ENCODE measurements at regions of chr9 and their contacts with region 1.

Region 1: DNA sequence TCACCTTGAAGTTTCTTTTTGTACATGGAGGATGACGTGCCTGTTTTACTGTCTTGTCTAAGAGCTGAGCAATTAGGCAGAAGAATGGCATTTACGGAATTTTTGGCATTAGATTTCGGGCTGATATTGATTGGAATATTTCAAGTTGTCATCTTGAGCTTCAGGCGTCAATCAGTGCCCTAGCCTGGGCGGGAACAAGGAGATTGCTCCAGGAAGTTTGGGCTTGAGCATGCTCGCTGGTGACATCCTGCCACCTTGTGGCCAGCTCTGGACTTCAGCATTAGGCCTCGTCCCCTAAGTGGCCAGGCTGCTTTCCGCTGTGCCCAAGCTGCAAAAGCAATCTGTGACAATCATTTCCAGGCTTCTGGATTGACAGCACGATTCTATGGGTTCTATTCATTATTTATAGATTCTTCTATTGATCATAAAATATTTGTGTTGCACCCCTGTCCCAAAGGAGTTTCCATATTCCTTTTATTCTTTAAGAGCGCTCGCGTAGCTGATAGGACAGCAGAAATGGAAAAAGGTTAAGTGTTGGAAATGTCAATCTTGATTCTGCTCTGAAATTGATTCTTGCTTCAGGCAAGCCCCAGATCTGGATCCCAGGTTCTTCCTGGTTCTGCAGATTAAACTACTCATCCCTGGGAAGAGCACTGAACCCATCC is 79.3 kb downstream of the SLC28A3 start:
- DNase-seq: peak; percentile 87
- ATAC-seq: peak; percentile 90
- H3K4me3 Mint-ChIP-seq: no peak overlapping the region
- H3K27ac Mint-ChIP-seq: no peak overlapping the region
- H3K4me1 Mint-ChIP-seq: peaks cover 17% of the 10 kb centered on the region
- H3K27me3 Mint-ChIP-seq: peaks cover 8% of the 10 kb centered on the region
- CTCF ChIP-seq: peak; percentile 67

Region 2: DNA sequence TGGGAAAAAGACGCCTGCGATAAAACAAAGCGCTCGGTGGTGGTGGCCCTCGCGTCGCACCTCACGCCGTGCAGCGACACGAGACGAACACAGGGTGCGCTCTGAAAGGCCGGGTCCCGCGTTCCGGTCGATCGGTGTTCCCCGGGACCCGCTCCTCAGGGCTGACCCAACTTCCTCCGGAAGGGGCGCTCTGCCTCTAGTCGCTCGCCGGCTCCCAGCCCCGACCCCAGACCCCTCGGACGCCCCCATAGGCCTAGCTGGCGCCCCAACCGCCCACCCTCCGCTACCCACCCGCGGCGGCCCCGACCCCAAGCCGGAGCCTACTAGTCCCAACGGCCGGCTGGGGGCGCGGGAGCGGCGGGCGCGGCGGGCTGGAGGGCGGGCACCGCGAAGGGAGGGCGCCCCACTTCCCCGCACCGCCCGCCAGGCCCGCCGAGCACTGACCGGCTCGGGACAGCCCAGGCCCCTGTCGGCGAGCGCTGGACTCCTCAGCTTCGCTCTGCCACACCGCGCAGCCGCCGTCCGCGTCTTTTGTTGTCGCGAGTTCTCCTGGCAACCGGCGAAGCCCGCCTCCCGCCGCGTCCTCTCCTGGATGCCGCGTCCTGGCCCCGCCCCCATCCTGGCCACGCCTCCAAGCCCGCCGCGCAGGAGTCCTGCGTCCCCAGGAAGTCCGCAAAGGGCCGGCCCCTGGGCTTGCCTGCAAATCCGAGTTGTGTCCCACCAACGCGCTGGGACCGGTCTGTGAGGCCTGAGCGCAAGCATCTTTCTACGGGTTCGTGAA is 340.1 kb before region 1 on chr9 and contains the start of gene KIF27:
- CTCF ChIA-PET with region 1: interaction called, 14 read pairs
- POLR2A ChIA-PET with region 1: no interaction called
- DNase-seq: peak; percentile 99
- ATAC-seq: peak; percentile 90
- H3K4me3 Mint-ChIP-seq: peak within 1 kb of the TSS; percentile 73
- H3K27ac Mint-ChIP-seq: peak within 1 kb of the TSS; percentile 99
- H3K4me1 Mint-ChIP-seq: peaks cover 6% of the 10 kb centered on the region
- H3K27me3 Mint-ChIP-seq: no peaks in the 10 kb centered on the region
- CTCF ChIP-seq: no peak; the same call in 1 of the 2 replicates
- total RNA-seq, gene KIF27: 3.9 to 5.7 TPM (median 5.4 TPM) in 3 replicates

Region 3: DNA sequence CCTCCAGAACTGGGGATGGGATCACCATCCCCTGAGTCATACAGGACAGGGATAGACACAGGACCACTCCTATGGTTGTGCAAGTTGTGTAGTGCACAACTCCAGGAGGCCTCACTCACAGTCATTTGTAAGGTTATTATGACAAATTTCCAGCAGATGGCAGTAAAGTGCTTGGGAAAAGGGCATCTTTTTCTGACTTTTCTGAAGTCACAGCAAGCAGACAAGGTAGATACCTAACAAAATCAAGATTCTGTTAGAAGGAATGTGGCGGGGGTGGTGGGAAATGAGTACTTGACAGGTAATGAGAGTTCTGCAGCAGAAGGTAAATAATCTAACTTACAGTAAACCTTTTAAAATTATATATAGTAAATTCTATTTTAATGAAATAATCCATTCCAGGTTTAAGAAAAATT is 323.3 kb before region 1 on chr9:
- CTCF ChIA-PET with region 1: interaction called, 28 read pairs
- POLR2A ChIA-PET with region 1: no interaction called
- DNase-seq: no peak
- ATAC-seq: peak; percentile 69
- H3K4me3 Mint-ChIP-seq: no peak overlapping the region
- H3K27ac Mint-ChIP-seq: no peak overlapping the region
- H3K4me1 Mint-ChIP-seq: peaks cover 19% of the 10 kb centered on the region
- H3K27me3 Mint-ChIP-seq: no peaks in the 10 kb centered on the region
- CTCF ChIP-seq: peak; percentile 38; the same call in 1 of the 2 replicates

Region 4: DNA sequence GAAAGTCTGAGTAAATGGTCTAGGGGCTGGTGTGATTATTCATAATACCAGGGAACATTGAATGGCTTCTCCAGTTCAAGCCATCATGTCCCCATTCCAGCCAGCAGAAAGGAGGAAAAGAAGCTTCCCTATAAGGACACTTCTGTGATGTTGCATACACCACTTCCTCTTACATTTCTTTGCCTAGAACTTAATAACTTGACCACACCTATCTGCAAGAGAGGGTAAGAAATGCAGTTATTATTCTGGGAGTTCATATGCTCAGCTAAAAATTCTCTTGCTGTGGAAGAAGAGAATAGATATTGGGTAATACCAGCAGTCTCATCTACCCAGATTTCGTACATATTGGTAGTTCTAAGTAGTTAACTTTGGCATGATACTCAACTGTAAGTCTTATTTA is 86.7 kb before region 1 on chr9:
- CTCF ChIA-PET with region 1: interaction called, 12 read pairs
- POLR2A ChIA-PET with region 1: no interaction called
- DNase-seq: no peak
- ATAC-seq: no peak
- H3K4me3 Mint-ChIP-seq: no peak overlapping the region
- H3K27ac Mint-ChIP-seq: no peak overlapping the region
- H3K4me1 Mint-ChIP-seq: peaks cover 5% of the 10 kb centered on the region
- H3K27me3 Mint-ChIP-seq: no peaks in the 10 kb centered on the region
- CTCF ChIP-seq: no peak

Region 5: DNA sequence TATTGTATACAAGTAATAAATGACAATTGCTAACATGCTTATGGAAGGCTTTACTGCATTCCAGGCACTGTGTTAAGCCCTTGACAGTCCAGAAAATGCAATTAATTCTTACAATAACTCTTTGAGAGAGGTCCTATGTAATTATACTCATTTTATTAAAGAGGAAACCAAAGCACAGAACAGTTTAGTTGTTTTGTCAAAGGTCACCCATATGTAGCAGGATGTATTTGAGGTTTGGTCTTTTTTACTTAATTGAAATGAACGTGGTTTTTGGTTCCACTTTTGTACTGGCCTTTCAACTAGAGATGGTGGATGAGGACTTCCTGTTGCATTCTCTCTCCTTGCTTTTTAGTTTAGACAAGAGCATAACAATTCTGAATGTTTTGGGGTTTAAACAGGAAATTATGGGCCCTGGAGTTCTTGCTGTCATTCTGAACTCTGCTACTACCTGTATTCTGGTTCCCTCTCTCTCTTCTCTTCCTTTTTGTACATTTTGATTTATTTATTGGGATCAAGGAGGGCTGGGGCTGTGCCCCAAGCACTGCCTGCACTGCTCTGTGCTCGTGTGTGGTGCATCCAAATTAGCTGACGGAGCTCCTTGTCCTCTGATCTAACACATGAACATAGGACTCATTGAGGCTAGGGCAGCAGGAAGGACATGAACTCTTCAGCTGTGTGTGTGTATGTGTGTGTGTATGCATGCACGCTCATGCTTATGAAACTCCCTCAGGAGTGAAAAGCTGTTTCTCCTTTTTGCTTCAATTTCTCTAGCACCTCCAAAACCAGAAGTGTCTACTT is 32.0 kb after region 1 on chr9:
- CTCF ChIA-PET with region 1: interaction called, 10 read pairs
- POLR2A ChIA-PET with region 1: no interaction called
- DNase-seq: no peak
- ATAC-seq: no peak
- H3K4me3 Mint-ChIP-seq: no peak overlapping the region
- H3K27ac Mint-ChIP-seq: no peak overlapping the region
- H3K4me1 Mint-ChIP-seq: peaks cover 17% of the 10 kb centered on the region
- H3K27me3 Mint-ChIP-seq: peaks cover 2% of the 10 kb centered on the region; the same call in 1 of the 2 replicates
- CTCF ChIP-seq: no peak

Region 6: DNA sequence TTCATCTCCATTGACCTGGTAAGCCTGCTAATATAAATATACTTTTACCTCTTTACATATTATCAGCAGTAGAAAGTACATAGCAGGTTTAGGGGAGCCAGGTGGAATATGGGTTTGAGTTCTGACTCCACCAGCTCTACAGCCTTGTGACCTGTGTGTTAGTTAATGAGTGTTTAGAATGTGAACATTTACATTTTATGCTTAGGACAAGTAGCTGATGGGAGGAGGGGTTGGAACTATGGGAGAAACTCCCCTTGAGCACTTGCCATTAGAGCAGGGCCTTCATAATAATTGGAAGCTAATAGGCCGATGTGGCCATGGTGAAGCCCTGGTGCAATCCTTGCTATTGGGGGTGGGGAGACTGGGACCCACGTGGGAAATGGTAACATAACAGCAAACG is 260.0 kb after region 1 on chr9:
- CTCF ChIA-PET with region 1: no interaction called
- POLR2A ChIA-PET with region 1: no interaction called
- DNase-seq: no peak
- ATAC-seq: no peak
- H3K4me3 Mint-ChIP-seq: no peak overlapping the region
- H3K27ac Mint-ChIP-seq: no peak overlapping the region
- H3K4me1 Mint-ChIP-seq: peaks cover 7% of the 10 kb centered on the region
- H3K27me3 Mint-ChIP-seq: peaks cover 5% of the 10 kb centered on the region; the same call in 1 of the 2 replicates
- CTCF ChIP-seq: no peak

Measured in WTC11 (cell line).